ENCODE measurements at regions of chr17 and their contacts with region 1.

Region 1: DNA sequence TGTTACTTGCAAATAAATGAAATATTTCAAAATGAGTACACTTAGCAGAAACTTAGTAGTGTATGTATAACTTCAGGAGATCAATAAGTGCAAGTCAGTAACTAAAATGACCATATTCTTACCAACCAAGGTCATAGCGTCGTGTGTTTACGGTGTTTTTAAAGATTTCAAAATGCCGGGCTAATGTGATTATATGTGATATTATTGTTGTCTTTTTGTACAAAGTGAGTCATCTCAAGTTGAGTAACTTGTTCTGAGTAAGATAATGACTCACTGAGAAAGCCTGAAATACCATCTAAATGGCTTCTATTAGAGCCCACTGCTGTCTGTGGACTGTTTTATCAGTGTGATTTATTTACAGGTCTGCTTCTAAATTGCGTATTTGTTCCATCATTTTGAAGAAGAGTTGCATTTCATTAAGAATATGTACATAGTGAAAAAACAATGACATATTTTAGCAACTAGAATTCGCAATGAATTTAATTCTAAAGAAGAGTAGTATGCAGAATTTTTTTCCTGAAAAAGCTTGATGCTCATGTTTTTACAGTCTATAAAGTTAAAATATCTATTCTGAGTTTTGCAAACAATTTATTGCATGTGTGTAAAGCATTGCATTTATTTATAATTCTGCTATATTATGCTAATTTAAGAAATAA is 12.7 kb downstream of the KRT12 start:
- DNase-seq: peak in 1 of 2 experiments; percentile 90
- H3K4me3 ChIP-seq: no peak overlapping the region
- H3K27ac ChIP-seq: peak overlapping the region; percentile 94
- H3K4me1 ChIP-seq: peaks cover 72% of the 10 kb centered on the region
- H3K27me3 ChIP-seq: no peaks in the 10 kb centered on the region
- CTCF ChIP-seq: no peak

Region 2: GRCh38 chr17:40803617-40804082 is 50.6 kb before region 1 on chr17:
- CTCF ChIA-PET with region 1: interaction called, 3 read pairs
- POLR2A ChIA-PET with region 1: no interaction called
- intact Hi-C with region 1: loop called (anchors 2 kb)
- DNase-seq: peak; percentile 74 to 82
- H3K4me3 ChIP-seq: no peak overlapping the region
- H3K27ac ChIP-seq: 0 out of 2 replicates have a peak overlapping the region, but pooled peaks have one; percentile 18
- H3K4me1 ChIP-seq: peaks cover 9% of the 10 kb centered on the region
- H3K27me3 ChIP-seq: no peaks in the 10 kb centered on the region
- CTCF ChIP-seq: peak; percentile 94

Region 3: GRCh38 chr17:40818733-40819527 is 35.4 kb before region 1 on chr17:
- CTCF ChIA-PET with region 1: no interaction called
- POLR2A ChIA-PET with region 1: interaction called, 6 read pairs
- intact Hi-C with region 1: loop called (anchors 1 kb)
- DNase-seq: peak; percentile 59 to 84
- H3K4me3 ChIP-seq: peak overlapping the region; percentile 83
- H3K27ac ChIP-seq: peak overlapping the region; percentile 83
- H3K4me1 ChIP-seq: peaks cover 25% of the 10 kb centered on the region
- H3K27me3 ChIP-seq: no peaks in the 10 kb centered on the region
- CTCF ChIP-seq: 0 out of 2 replicates have a peak, but pooled peaks have one; percentile 18

Region 4: DNA sequence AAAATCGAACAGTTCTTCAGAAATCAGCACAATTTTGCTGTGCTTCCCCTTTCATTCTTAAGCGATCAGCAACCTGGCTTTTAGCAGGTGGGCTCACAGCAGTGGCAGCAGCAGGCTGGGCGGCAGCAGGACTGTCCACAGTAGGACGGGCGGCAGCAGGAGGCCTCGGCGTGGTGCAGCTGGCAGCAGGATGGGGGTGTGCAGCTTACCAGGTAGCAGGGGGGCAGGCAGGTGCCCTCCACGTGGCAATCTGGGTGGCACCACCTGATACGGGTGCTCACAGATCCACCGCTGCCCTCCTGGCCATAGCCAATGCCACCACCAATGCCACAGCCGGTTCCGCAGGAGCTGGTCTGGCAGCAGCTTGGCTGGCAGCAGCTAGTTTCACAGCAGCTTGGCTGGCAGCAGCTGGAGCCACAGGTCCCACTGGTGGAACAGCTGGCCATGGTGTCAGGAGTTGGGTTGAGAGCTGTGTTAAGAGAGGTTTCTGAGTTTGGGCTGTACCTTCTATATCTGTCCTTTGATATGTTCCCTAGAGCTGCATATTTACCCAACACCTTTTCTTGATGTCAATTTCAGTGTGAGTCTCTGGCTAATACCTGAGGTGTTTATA is 175.5 kb after region 1 on chr17 and contains the start of gene KRTAP1-4:
- CTCF ChIA-PET with region 1: no interaction called
- POLR2A ChIA-PET with region 1: no interaction called
- intact Hi-C with region 1: no loop called
- DNase-seq: no peak
- H3K4me3 ChIP-seq: no peak within 1 kb of the TSS
- H3K27ac ChIP-seq: no peak within 1 kb of the TSS
- H3K4me1 ChIP-seq: peaks cover 15% of the 10 kb centered on the region
- H3K27me3 ChIP-seq: no peaks in the 10 kb centered on the region
- CTCF ChIP-seq: no peak
- total RNA-seq, gene KRTAP1-4: not detected in 2 replicates

Region 5: GRCh38 chr17:41496820-41497408 is 642.6 kb after region 1 on chr17:
- CTCF ChIA-PET with region 1: interaction called, 3 read pairs
- POLR2A ChIA-PET with region 1: no interaction called
- intact Hi-C with region 1: loop called (anchors 5 kb)
- DNase-seq: peak; percentile 82 to 87
- H3K4me3 ChIP-seq: no peak overlapping the region
- H3K27ac ChIP-seq: no peak overlapping the region; the same call in 1 of the 2 replicates
- H3K4me1 ChIP-seq: peaks cover 83% of the 10 kb centered on the region
- H3K27me3 ChIP-seq: no peaks in the 10 kb centered on the region
- CTCF ChIP-seq: peak; percentile 86

Measured in PC-9 (cell line).